ENCODE measurements at regions of chr2 and their contacts with region 1.

Region 1: DNA sequence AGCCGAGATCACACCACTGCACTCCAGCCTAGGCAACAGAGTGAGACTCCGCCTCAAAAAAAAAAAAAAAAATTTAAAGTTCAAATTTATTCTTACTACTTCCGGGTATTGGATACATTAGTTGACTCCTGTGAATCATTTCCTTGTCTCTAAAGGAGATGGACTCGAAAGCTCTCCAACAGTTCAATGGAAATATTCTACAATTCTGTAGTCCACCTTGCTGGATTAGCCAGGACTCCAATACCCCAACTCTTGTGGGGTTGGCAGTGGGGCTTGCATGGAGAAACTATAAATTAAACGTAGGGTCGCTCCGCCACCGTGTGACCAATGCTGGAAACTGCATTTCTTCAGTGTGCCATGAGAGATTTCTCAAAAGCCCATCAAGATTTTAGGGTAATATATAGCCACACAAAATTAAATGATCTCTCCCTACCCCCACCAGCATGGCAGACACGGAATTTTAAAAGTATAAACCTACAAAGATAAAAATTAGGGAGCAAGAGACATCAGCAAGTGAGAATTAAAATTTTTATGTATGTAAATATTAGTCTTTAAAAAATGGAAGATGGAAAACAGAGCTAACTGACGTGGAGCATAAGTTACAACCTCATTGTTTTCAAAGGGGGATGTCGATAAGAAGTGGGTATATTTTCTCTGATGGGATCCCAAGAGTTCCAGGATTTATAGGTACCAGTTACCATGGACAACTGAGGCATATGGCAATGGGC is 27.8 kb upstream of the GAREM2 start:
- DNase-seq: peak; percentile 54 to 83 (median 64)
- ATAC-seq: peak; percentile 86
- H3K4me3 ChIP-seq: no peak overlapping the region
- H3K27ac ChIP-seq: no peak overlapping the region
- H3K4me1 ChIP-seq: peaks cover 5 to 15% of the 10 kb centered on the region in 2 experiments; a peak in 3 of 5 replicates
- H3K27me3 ChIP-seq: peaks cover 11 to 13% of the 10 kb centered on the region in 2 experiments; a peak in 4 of 5 replicates
- CTCF ChIP-seq: peak; percentile 75 to 90 (median 87)
- EP300 ChIP-seq: no peak
- POLR2A ChIP-seq: no peak
- RAD21 ChIP-seq: peak; percentile 93 to 95

Region 2: GRCh38 chr2:25606892-25607291 is 538.2 kb before region 1 on chr2:
- CTCF ChIA-PET with region 1: interaction called, 9 read pairs
- POLR2A ChIA-PET with region 1: no interaction called
- in situ Hi-C with region 1: no loop called
- intact Hi-C with region 1: loop called (anchors 2 kb)
- DNase-seq: peak; percentile 12 to 50 (median 18)
- ATAC-seq: 0 out of 3 replicates have a peak, but pooled peaks have one; percentile 55
- H3K4me3 ChIP-seq: no peak overlapping the region
- H3K27ac ChIP-seq: no peak overlapping the region
- H3K4me1 ChIP-seq: no peaks in the 10 kb centered on the region
- H3K27me3 ChIP-seq: peaks cover 0 to 6% of the 10 kb centered on the region in 2 experiments; a peak in 1 of 5 replicates
- CTCF ChIP-seq: peak; percentile 54 to 80 (median 61)
- EP300 ChIP-seq: no peak
- POLR2A ChIP-seq: no peak
- RAD21 ChIP-seq: peak; percentile 55 to 80

Region 3: DNA sequence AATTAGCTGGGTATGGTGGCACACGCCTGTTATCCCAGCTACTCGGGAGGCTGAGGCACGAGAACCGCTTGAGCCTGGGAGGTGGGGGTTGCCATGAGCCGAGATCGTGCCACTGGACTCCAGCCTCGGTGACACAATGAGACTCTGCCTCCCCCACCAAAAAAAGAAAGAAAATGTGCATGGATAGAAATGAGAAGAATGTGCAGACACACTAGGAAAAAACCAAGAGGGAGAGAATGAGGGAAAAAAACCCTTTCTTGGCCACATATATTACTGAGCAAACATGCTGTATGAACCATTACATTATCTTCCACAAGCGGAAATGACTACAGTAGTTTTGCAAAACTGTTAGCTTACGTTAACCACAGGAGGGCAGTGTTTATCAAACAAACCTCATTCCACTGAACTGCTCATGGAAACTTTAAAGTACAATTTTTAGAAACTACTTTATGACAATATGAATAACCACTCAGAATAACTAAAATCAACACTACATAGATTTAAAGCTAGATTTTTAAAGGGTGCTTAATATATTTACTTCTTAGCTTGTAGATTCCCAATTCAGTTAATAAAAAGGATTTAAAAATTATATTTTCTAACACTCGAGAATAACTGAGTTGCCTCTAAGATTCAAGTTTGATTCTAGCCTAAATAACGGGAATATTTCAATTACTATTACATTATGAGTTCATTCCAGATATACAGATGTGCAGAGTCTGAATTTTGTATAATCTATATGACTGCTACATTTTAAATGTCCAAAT is 293.2 kb before region 1 on chr2:
- CTCF ChIA-PET with region 1: interaction called, 17 read pairs
- POLR2A ChIA-PET with region 1: no interaction called
- in situ Hi-C with region 1: loop called (anchors 5 kb)
- intact Hi-C with region 1: loop called (anchors 1 kb)
- DNase-seq: peak; percentile 51 to 83 (median 62)
- ATAC-seq: peak; percentile 92
- H3K4me3 ChIP-seq: peak overlapping the region; percentile 21; the same call in 1 of the 2 replicates
- H3K27ac ChIP-seq: peak overlapping the region; percentile 98
- H3K4me1 ChIP-seq: peaks cover 17 to 22% of the 10 kb centered on the region in 2 experiments
- H3K27me3 ChIP-seq: no peaks in the 10 kb centered on the region
- CTCF ChIP-seq: peak; percentile 53 to 81 (median 65); a peak in 5 of 6 replicates
- EP300 ChIP-seq: peak; percentile 67; the same call in 1 of the 2 replicates
- POLR2A ChIP-seq: peak; percentile 71
- RAD21 ChIP-seq: peak; percentile 85 to 89

Region 4: GRCh38 chr2:25991965-25992364 is 153.2 kb before region 1 on chr2:
- CTCF ChIA-PET with region 1: interaction called, 44 read pairs
- POLR2A ChIA-PET with region 1: interaction called, 3 read pairs
- in situ Hi-C with region 1: loop called (anchors 5 kb)
- intact Hi-C with region 1: loop called (anchors 1 kb)
- DNase-seq: peak in 1 of 4 experiments; percentile 21
- ATAC-seq: peak; percentile 72
- H3K4me3 ChIP-seq: no peak overlapping the region
- H3K27ac ChIP-seq: no peak overlapping the region
- H3K4me1 ChIP-seq: peaks cover 0 to 8% of the 10 kb centered on the region in 2 experiments; a peak in 3 of 5 replicates
- H3K27me3 ChIP-seq: no peaks in the 10 kb centered on the region
- CTCF ChIP-seq: no peak
- EP300 ChIP-seq: no peak
- POLR2A ChIP-seq: no peak
- RAD21 ChIP-seq: no peak

Region 5: DNA sequence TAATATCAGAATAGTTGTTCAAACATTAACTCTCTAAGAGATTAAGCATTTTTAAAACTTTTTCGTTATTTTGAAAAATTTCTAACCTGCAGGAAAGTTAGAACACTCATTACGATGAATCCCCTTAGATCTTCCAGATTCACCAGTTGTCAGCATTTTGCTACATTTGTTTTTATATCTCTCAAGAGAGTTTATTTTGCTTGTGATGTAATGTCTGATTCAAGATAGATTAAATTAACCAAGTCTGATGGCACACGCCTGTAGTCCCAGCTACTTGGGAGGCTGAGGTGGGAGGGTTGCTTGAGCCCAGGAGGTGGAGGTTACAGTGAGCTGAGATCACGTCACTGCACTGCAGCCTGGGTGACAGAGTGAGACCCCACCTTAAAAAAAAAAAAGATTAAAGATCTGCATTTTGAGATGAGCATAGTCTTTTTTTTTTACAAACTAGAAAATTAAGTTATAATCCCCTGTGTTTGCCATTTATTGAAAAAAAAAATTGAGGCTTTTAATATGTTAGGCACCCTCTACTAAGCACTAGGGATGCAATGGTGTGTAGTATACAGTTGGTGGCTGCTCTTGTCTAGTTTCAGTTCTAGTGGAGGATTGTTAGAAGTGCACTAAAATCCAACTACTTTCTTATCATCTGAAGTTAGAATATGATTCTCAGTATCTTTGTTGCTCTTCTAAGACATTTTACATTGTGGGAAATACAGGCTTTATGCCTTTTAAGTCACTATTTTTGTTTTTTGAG is 90.3 kb before region 1 on chr2:
- CTCF ChIA-PET with region 1: no interaction called
- POLR2A ChIA-PET with region 1: no interaction called
- in situ Hi-C with region 1: no loop called
- intact Hi-C with region 1: loop called (anchors 1 kb)
- DNase-seq: no peak
- ATAC-seq: peak; percentile 44
- H3K4me3 ChIP-seq: no peak overlapping the region
- H3K27ac ChIP-seq: 0 out of 3 replicates have a peak overlapping the region, but pooled peaks have one; percentile 4
- H3K4me1 ChIP-seq: peaks cover 20 to 24% of the 10 kb centered on the region in 2 experiments
- H3K27me3 ChIP-seq: no peaks in the 10 kb centered on the region
- CTCF ChIP-seq: no peak
- EP300 ChIP-seq: no peak
- POLR2A ChIP-seq: no peak
- RAD21 ChIP-seq: no peak

Region 6: GRCh38 chr2:26088032-26088643 is 57.0 kb before region 1 on chr2:
- CTCF ChIA-PET with region 1: interaction called, 4 read pairs
- POLR2A ChIA-PET with region 1: no interaction called
- in situ Hi-C with region 1: no loop called
- intact Hi-C with region 1: loop called (anchors 1 kb)
- DNase-seq: peak; percentile 44 to 57 (median 50)
- ATAC-seq: peak; percentile 84
- H3K4me3 ChIP-seq: no peak overlapping the region
- H3K27ac ChIP-seq: no peak overlapping the region
- H3K4me1 ChIP-seq: peaks cover 2 to 8% of the 10 kb centered on the region in 2 experiments; a peak in 4 of 5 replicates
- H3K27me3 ChIP-seq: no peaks in the 10 kb centered on the region
- CTCF ChIP-seq: peak; percentile 55 to 74 (median 66)
- EP300 ChIP-seq: no peak
- POLR2A ChIP-seq: no peak
- RAD21 ChIP-seq: peak; percentile 36 to 64

Region 7: DNA sequence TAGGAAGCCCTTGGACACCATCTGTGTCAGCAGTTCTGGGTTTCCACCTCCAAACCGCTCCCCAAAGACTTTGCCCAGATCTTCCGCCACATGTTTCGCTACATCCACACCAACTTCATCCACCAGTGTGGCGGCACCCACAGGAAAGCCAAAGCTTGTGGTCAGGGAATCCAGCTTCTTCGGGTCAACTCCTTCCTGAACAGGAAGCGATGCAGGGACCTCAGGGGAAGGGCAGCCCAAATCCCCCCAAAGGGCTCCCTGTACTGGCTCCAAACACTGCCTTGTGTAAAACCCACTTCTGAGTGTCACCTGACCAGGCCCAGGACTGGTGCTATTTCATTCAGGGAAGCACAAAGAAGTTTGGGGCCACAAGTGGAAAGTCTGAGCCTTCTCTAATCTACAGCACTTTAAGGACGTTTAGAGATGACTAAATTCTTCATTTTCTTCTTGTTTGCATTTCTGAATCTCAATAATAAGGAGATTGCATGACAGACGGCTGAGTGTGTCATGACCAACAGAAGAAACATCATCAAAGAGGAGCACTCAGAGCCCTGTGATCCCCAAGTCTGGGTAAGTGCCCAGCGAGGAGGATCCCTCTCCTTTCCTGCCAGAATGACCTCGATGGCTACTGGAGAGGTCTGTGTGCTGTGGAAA is 48.6 kb after region 1 on chr2:
- CTCF ChIA-PET with region 1: no interaction called
- POLR2A ChIA-PET with region 1: no interaction called
- in situ Hi-C with region 1: no loop called
- intact Hi-C with region 1: no loop called
- DNase-seq: no peak
- ATAC-seq: no peak
- H3K4me3 ChIP-seq: no peak overlapping the region
- H3K27ac ChIP-seq: no peak overlapping the region
- H3K4me1 ChIP-seq: peaks cover 0 to 12% of the 10 kb centered on the region in 2 experiments; a peak in 3 of 5 replicates
- H3K27me3 ChIP-seq: no peaks in the 10 kb centered on the region
- CTCF ChIP-seq: no peak
- EP300 ChIP-seq: no peak
- POLR2A ChIP-seq: no peak
- RAD21 ChIP-seq: no peak

Measured in K562 (cell line).